CD4-positive, alpha-beta memory T cell (primary cell): ENCODE measurements at regions of chr11 and their contacts with region 1.

Region 1: DNA sequence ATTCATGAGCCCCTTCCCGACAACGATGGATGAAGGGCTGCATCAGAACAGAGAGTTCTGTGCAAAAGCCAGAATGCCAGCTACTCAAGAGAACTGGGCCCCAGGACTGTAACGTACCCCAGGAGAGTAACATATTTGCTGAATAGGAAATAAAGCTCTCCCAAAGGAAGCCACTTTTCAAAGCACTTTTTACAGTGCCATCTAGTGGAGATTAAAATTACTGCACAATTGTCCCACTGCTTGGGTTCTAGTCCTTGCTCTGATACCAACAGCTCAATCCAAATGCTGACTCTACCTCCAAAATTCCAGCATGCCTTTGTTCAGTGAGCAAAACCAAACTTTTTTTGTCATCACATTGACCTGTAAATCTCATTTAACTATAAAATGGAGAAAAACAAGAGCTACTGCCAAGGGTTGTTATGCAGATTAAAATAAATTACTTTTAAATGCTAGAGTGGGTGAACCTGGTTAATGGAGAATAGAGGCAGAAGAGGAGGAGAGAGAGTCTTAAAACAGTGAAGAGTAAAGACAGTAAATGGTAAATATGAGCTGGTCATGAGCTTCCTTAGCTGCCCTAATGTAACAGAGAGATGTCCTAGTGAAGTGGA is 87.6 kb upstream of the FSHB start:
- DNase-seq: peak in 3 of 5 donors; percentile 3 to 18 (median 4)
- H3K4me3 ChIP-seq: no peak overlapping the region
- H3K4me3 Mint-ChIP-seq: no peak overlapping the region
- H3K27ac ChIP-seq: no peak overlapping the region
- H3K27ac Mint-ChIP-seq: no peak overlapping the region
- H3K4me1 ChIP-seq: no peaks in the 10 kb centered on the region
- H3K4me1 Mint-ChIP-seq: no peaks in the 10 kb centered on the region
- H3K27me3 ChIP-seq: no peaks in the 10 kb centered on the region
- H3K27me3 Mint-ChIP-seq: peaks cover 1 to 4% of the 10 kb centered on the region in 2 donors

Region 2: GRCh38 chr11:30050428-30050827 is 92.8 kb before region 1 on chr11:
- CTCF ChIA-PET with region 1: no interaction called
- POLR2A ChIA-PET with region 1: no interaction called
- intact Hi-C with region 1: no loop called
- DNase-seq: no peak
- H3K4me3 ChIP-seq: no peak overlapping the region
- H3K4me3 Mint-ChIP-seq: no peak overlapping the region
- H3K27ac ChIP-seq: no peak overlapping the region
- H3K27ac Mint-ChIP-seq: no peak overlapping the region
- H3K4me1 ChIP-seq: no peaks in the 10 kb centered on the region
- H3K4me1 Mint-ChIP-seq: no peaks in the 10 kb centered on the region
- H3K27me3 ChIP-seq: no peaks in the 10 kb centered on the region
- H3K27me3 Mint-ChIP-seq: no peaks in the 10 kb centered on the region

Region 3: GRCh38 chr11:30128269-30128932 is 14.8 kb before region 1 on chr11:
- CTCF ChIA-PET with region 1: interaction called, 39 read pairs
- POLR2A ChIA-PET with region 1: no interaction called
- intact Hi-C with region 1: no loop called
- DNase-seq: no peak
- H3K4me3 ChIP-seq: no peak overlapping the region
- H3K4me3 Mint-ChIP-seq: no peak overlapping the region
- H3K27ac ChIP-seq: no peak overlapping the region
- H3K27ac Mint-ChIP-seq: no peak overlapping the region
- H3K4me1 ChIP-seq: no peaks in the 10 kb centered on the region
- H3K4me1 Mint-ChIP-seq: no peaks in the 10 kb centered on the region
- H3K27me3 ChIP-seq: no peaks in the 10 kb centered on the region
- H3K27me3 Mint-ChIP-seq: peaks cover 0 to 2% of the 10 kb centered on the region in 2 donors

Region 4: DNA sequence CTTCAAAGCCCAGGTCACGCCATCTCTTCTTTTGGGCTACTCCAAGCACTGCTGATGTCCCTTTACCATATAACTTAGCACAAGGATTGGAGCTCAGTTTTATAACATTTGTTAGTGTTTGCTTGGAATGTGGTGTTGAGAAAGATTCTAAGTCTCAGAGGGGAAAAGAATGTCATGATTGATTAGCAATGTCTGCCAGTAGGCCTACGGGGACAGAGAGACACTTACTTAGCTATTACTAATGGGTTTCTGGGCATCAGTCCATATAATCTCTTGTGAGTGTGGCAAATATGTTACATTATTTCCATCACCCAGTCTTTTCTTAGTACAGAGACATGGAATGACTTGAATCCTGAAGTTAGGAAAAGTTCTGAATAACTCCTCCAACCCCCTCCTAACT is 12.2 kb after region 1 on chr11:
- CTCF ChIA-PET with region 1: interaction called, 59 read pairs
- POLR2A ChIA-PET with region 1: no interaction called
- intact Hi-C with region 1: no loop called
- DNase-seq: no peak
- H3K4me3 ChIP-seq: no peak overlapping the region
- H3K4me3 Mint-ChIP-seq: no peak overlapping the region
- H3K27ac ChIP-seq: no peak overlapping the region
- H3K27ac Mint-ChIP-seq: no peak overlapping the region
- H3K4me1 ChIP-seq: no peaks in the 10 kb centered on the region
- H3K4me1 Mint-ChIP-seq: no peaks in the 10 kb centered on the region
- H3K27me3 ChIP-seq: no peaks in the 10 kb centered on the region
- H3K27me3 Mint-ChIP-seq: peaks cover under 1 to 5% of the 10 kb centered on the region in 2 donors